ENCODE measurements at regions of chr4 and their contacts with region 1.

Region 1: GRCh38 chr4:121900132-121900983 is 30.1 kb upstream of the BBS7 start:
- DNase-seq: peak; percentile 67
- ATAC-seq: peak; percentile 82
- H3K4me3 Mint-ChIP-seq: no peak overlapping the region
- H3K27ac Mint-ChIP-seq: no peak overlapping the region
- H3K4me1 Mint-ChIP-seq: peaks cover 6% of the 10 kb centered on the region
- H3K27me3 Mint-ChIP-seq: peaks cover 3% of the 10 kb centered on the region

Region 2: DNA sequence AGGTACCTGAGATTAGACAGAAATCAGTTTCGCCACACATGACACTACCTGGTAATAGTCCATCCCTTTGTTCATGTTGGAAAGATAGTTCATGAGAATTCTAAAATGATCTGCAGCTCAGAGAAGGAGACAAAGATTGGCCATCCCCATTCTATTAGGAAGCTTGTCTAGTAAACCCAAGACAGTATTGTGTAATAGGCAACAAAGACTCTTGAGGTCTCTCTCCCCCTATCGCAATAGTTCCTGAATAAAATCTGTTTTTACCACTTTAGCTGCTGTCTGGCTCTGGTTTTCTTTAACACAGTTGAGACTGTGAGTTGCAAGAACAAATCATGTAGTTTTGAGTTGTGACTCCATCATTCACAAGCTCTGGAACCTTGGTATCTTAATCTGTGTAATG is 15.2 kb before region 1 on chr4:
- CTCF ChIA-PET with region 1: interaction called, 16 read pairs
- POLR2A ChIA-PET with region 1: no interaction called
- DNase-seq: no peak
- ATAC-seq: no peak
- H3K4me3 Mint-ChIP-seq: no peak overlapping the region
- H3K27ac Mint-ChIP-seq: no peak overlapping the region
- H3K4me1 Mint-ChIP-seq: peaks cover 2% of the 10 kb centered on the region
- H3K27me3 Mint-ChIP-seq: peaks cover 49% of the 10 kb centered on the region

Region 3: GRCh38 chr4:121927948-121928347 is 27.6 kb after region 1 on chr4:
- CTCF ChIA-PET with region 1: interaction called, 10 read pairs
- POLR2A ChIA-PET with region 1: no interaction called
- DNase-seq: no peak
- ATAC-seq: no peak
- H3K4me3 Mint-ChIP-seq: no peak overlapping the region
- H3K27ac Mint-ChIP-seq: no peak overlapping the region
- H3K4me1 Mint-ChIP-seq: no peaks in the 10 kb centered on the region
- H3K27me3 Mint-ChIP-seq: peaks cover 25% of the 10 kb centered on the region

Region 4: GRCh38 chr4:121950212-121950679 is 49.9 kb after region 1 on chr4:
- CTCF ChIA-PET with region 1: interaction called, 12 read pairs
- POLR2A ChIA-PET with region 1: no interaction called
- DNase-seq: peak; percentile 89
- ATAC-seq: peak; percentile 87
- H3K4me3 Mint-ChIP-seq: peak overlapping the region; percentile 85
- H3K27ac Mint-ChIP-seq: peak overlapping the region; percentile 40
- H3K4me1 Mint-ChIP-seq: peaks cover 17% of the 10 kb centered on the region
- H3K27me3 Mint-ChIP-seq: peaks cover 53% of the 10 kb centered on the region

Region 5: GRCh38 chr4:122003335-122003734 is 103.0 kb after region 1 on chr4:
- CTCF ChIA-PET with region 1: interaction called, 11 read pairs
- POLR2A ChIA-PET with region 1: no interaction called
- DNase-seq: peak; percentile 34
- ATAC-seq: peak; percentile 69
- H3K4me3 Mint-ChIP-seq: no peak overlapping the region
- H3K27ac Mint-ChIP-seq: no peak overlapping the region
- H3K4me1 Mint-ChIP-seq: peaks cover 10% of the 10 kb centered on the region
- H3K27me3 Mint-ChIP-seq: peaks cover 21% of the 10 kb centered on the region